ENCODE measurements at regions of chr20 and their contacts with region 1.

Region 1: GRCh38 chr20:16573001-16573965 is at the start of gene KIF16B:
- DNase-seq: peak; percentile 53
- ATAC-seq: peak; percentile 88
- H3K4me3 ChIP-seq: peak within 1 kb of the TSS; percentile 64
- H3K27ac ChIP-seq: peak within 1 kb of the TSS; percentile 14; the same call in 1 of the 2 replicates
- H3K4me1 ChIP-seq: peaks cover 4% of the 10 kb centered on the region
- H3K27me3 ChIP-seq: no peaks in the 10 kb centered on the region
- CTCF ChIP-seq: no peak
- EP300 ChIP-seq: no peak
- POLR2A ChIP-seq: 0 out of 2 replicates have a peak, but pooled peaks have one; percentile 37
- RAD21 ChIP-seq: no peak
- polyA plus RNA-seq, gene KIF16B: 0.21 to 0.64 TPM

Region 2: GRCh38 chr20:16314320-16314719 is 259.0 kb before region 1 on chr20:
- CTCF ChIA-PET with region 1: no interaction called
- POLR2A ChIA-PET with region 1: no interaction called
- RAD21 ChIA-PET with region 1: no interaction called
- SMC1A ChIA-PET with region 1: no interaction called
- in situ Hi-C with region 1: no loop called
- intact Hi-C with region 1: loop called (anchors 10 kb)
- DNase-seq: peak; percentile 69
- ATAC-seq: peak; percentile 78
- H3K4me3 ChIP-seq: peak overlapping the region; percentile 25; the same call in 1 of the 2 replicates
- H3K27ac ChIP-seq: no peak overlapping the region; the same call in 1 of the 2 replicates
- H3K4me1 ChIP-seq: peaks cover 21% of the 10 kb centered on the region
- H3K27me3 ChIP-seq: no peaks in the 10 kb centered on the region
- CTCF ChIP-seq: no peak
- EP300 ChIP-seq: no peak
- POLR2A ChIP-seq: no peak
- RAD21 ChIP-seq: no peak

Region 3: DNA sequence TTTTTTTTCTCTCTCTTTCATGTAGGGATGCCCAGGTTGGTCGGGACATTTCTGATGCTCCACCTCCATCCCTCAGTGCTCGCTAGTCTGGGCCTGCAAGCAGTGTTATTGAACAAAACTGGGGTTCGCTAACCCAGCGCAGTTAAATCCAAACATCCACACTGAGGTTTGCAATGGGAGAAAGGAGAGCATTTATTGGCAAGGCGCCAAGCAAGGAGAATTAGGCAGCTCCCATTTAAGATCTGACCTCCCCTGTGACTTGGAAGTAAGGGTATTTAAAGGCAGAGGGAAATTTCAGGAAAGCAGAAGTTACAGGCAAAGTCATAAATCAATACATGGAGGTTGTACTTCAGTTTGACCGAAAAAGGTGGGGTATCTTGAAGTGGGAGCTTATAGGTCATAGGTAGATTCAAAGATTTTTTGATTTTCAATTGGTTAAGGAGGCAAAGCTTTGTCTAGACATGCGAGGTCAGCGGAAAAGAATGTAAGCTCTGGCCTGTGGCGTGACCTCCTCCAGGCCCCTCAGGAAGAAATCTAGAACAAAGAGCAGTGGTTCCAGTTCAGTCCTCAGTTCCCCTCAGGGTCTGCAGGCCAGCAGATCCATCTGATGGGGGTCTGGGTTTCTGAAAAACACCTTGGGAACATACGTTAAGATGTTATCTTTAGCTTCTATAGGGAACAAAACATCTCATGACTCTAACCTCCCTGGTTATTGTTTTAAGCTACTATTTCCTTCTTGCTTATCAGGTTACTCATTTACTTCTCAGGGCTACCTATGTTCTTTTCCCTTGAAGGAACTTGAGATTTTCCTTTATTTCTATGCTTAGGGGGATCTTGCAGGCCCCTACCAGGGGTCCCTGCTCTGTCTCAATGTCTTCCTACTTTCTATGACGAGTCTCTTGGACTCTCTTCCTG is 66.0 kb after region 1 on chr20:
- CTCF ChIA-PET with region 1: no interaction called
- POLR2A ChIA-PET with region 1: no interaction called
- RAD21 ChIA-PET with region 1: no interaction called
- SMC1A ChIA-PET with region 1: no interaction called
- in situ Hi-C with region 1: no loop called
- intact Hi-C with region 1: no loop called
- DNase-seq: no peak
- ATAC-seq: no peak
- H3K4me3 ChIP-seq: no peak overlapping the region
- H3K27ac ChIP-seq: no peak overlapping the region
- H3K4me1 ChIP-seq: no peaks in the 10 kb centered on the region
- H3K27me3 ChIP-seq: no peaks in the 10 kb centered on the region; a peak in 1 of 4 replicates
- CTCF ChIP-seq: no peak
- EP300 ChIP-seq: no peak
- POLR2A ChIP-seq: no peak
- RAD21 ChIP-seq: no peak

Region 4: GRCh38 chr20:16729565-16730456 is 156.5 kb after region 1 on chr20 and contains the start of gene SNRPB2:
- CTCF ChIA-PET with region 1: no interaction called
- POLR2A ChIA-PET with region 1: interaction called, 4 read pairs
- RAD21 ChIA-PET with region 1: no interaction called
- SMC1A ChIA-PET with region 1: no interaction called
- in situ Hi-C with region 1: no loop called
- intact Hi-C with region 1: loop called (anchors 1 kb)
- DNase-seq: peak; percentile 82
- ATAC-seq: peak; percentile 96
- H3K4me3 ChIP-seq: peak within 1 kb of the TSS; percentile 89
- H3K27ac ChIP-seq: peak within 1 kb of the TSS; percentile 87
- H3K4me1 ChIP-seq: peaks cover 4% of the 10 kb centered on the region
- H3K27me3 ChIP-seq: no peaks in the 10 kb centered on the region
- CTCF ChIP-seq: no peak
- EP300 ChIP-seq: peak in 1 of 2 experiments; percentile 25; a peak in 1 of 4 replicates
- POLR2A ChIP-seq: peak; percentile 98
- RAD21 ChIP-seq: no peak
- polyA plus RNA-seq, gene SNRPB2: 188 to 245 TPM

Measured in GM12878 (cell line).